Gastrocnemius medialis (tissue), 4 donors: ENCODE measurements at regions of chr2 and their contacts with region 1.

Region 1: DNA sequence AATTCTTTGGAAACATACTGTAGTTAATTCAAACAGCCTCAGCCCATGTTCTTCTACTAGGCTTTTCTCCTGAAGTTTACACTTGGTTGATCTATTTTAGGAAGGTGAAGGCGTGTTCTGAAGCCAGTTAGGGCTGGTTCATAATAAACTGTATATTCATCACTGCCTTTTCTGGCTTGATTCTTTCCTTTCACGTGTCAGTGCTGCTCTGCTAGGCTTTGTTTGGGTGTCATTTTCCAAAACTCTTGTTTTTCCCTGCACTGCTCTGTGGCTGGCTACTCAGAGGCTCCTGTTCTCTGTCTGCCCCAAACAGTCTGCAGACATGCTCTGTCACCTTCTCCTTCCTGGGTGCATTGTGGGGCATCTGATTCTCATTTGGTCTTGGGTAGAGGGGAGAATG is 136.1 kb downstream of the PARD3B start:
- DNase-seq: no peak
- ATAC-seq: peak in 1 of 2 donors; percentile 69
- H3K4me3 ChIP-seq: no peak overlapping the region
- H3K27ac ChIP-seq: no peak overlapping the region
- H3K4me1 ChIP-seq: peaks cover 9 to 10% of the 10 kb centered on the region in 2 donors
- H3K27me3 ChIP-seq: no peaks in the 10 kb centered on the region
- CTCF ChIP-seq: no peak
- POLR2A ChIP-seq: no peak

Region 2: DNA sequence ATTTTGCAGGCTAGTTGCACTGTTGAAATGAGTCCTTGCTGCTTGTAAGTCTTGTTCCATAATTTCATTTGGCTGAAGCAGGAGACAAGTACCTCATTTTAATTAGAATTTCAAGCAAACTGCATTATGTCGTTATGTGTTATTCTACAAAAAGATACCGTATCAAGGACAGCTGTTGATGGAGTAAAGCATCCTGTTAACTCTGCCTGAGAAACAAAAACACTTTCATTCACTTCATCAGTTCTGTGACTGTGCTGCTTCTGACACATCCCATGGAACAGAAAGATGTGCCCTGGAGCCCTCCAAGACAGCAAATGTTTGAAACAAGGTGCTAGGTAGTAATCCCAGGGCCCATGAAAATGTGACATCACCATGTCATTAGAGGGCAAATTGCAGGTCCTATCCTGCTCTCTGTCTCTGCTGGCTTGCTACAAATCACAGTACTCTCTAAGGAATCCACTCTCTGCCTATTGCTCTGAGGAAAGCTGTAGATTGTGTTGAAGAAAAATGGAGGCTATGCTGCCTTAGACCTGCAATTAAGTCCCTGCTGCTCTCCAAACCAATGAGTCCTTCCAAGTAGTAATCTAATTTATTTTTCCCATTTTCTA is 345.9 kb before region 1 on chr2:
- in situ Hi-C with region 1: loop called in 2 of 4 experiments (anchors 10 to 25 kb)
- intact Hi-C with region 1: no loop called
- DNase-seq: no peak
- ATAC-seq: no peak
- H3K4me3 ChIP-seq: no peak overlapping the region
- H3K27ac ChIP-seq: no peak overlapping the region
- H3K4me1 ChIP-seq: no peaks in the 10 kb centered on the region
- H3K27me3 ChIP-seq: no peaks in the 10 kb centered on the region
- CTCF ChIP-seq: no peak
- POLR2A ChIP-seq: no peak

Region 3: DNA sequence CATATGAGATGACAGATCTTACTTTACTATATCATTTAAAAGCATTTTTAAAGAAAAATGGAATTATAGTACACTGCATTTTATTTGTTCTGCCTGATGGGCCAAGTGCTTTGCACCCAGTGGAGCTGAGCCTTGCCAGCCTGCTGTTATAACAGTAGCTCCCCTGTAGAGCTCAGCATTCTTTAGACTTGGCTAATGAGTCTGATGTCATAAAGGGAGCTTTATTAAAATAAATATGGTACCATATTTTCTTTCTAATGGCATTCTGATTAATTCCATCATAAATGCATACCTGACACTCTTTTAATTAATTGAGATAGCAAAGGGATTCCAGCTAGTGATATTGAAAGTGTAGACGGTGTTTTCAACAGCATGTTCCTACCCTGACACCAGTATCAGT is 95.5 kb before region 1 on chr2:
- in situ Hi-C with region 1: no loop called
- intact Hi-C with region 1: no loop called
- DNase-seq: no peak
- ATAC-seq: no peak
- H3K4me3 ChIP-seq: no peak overlapping the region
- H3K27ac ChIP-seq: no peak overlapping the region
- H3K4me1 ChIP-seq: no peaks in the 10 kb centered on the region
- H3K27me3 ChIP-seq: no peaks in the 10 kb centered on the region
- CTCF ChIP-seq: no peak
- POLR2A ChIP-seq: no peak